ENCODE measurements at regions of chr11 and their contacts with region 1.

Region 1: DNA sequence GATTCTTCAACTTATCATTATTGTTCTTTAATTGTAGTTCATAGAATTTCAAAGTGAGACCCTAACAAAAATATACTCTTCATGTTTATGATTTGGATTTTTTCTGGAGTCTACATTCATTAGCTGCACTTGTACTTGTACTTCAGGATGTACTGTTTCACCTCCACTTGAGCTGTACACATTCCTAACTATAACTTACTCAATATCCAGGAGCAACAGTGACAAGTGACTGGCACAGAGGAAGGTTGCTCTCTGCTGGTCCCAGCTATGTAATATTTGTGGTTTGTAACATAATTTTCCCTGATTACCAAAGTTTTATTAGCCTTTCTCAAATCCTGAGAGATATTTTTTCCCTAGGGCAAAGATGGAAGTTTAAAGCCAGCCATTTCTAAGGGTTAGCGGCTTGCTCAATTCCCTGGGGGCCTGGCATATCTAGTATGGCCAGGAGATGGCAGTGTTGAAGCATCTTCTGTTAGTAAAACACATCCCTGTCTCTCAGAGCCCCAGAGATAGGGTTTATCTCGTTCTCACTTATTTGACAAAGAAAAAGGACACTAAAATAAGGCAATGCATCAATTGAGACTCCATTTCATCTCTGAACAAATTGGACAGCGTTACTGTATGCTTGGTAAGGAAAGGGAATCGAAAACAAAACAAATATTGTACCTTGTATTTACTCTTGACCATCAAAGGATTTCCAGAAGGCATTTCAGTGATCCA is 14.2 kb downstream of the OR52A5 start:
- DNase-seq: peak; percentile 6
- H3K4me3 Mint-ChIP-seq: no peak overlapping the region
- H3K27ac Mint-ChIP-seq: no peak overlapping the region
- H3K4me1 Mint-ChIP-seq: no peaks in the 10 kb centered on the region
- H3K27me3 Mint-ChIP-seq: peaks cover 2% of the 10 kb centered on the region

Region 2: DNA sequence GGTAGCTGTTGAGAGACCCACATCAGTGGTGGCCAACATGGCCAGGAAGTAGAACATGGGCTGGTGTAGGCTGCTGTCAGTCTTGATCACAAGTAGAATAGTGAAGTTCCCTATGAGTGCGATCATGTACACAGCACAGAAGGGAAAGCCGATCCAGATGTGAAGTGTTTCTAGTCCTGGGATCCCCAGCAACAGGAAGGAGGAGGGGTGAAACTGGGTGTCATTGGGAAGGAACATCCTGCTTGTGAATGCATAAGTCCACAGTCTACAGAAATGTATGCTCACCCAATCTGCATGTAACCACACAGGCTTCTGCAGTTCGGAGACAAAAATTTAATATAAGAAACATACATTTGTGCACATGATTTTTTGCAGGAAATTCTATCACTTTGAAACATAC is 64.6 kb before region 1 on chr11 and contains the start of gene OR52E2:
- intact Hi-C with region 1: no loop called
- DNase-seq: no peak
- H3K4me3 Mint-ChIP-seq: no peak within 1 kb of the TSS
- H3K27ac Mint-ChIP-seq: no peak within 1 kb of the TSS
- H3K4me1 Mint-ChIP-seq: no peaks in the 10 kb centered on the region
- H3K27me3 Mint-ChIP-seq: no peaks in the 10 kb centered on the region
- total RNA-seq, gene OR52E2: not detected in 2 replicates

Region 3: GRCh38 chr11:5291207-5291838 is 167.4 kb after region 1 on chr11:
- intact Hi-C with region 1: loop called (anchors 1 kb)
- DNase-seq: no peak
- H3K4me3 Mint-ChIP-seq: no peak overlapping the region
- H3K27ac Mint-ChIP-seq: no peak overlapping the region
- H3K4me1 Mint-ChIP-seq: no peaks in the 10 kb centered on the region
- H3K27me3 Mint-ChIP-seq: no peaks in the 10 kb centered on the region

Region 4: GRCh38 chr11:5380740-5381342 is 256.9 kb after region 1 on chr11:
- intact Hi-C with region 1: loop called (anchors 1 kb)
- DNase-seq: peak; percentile 2
- H3K4me3 Mint-ChIP-seq: no peak overlapping the region
- H3K27ac Mint-ChIP-seq: no peak overlapping the region
- H3K4me1 Mint-ChIP-seq: no peaks in the 10 kb centered on the region
- H3K27me3 Mint-ChIP-seq: no peaks in the 10 kb centered on the region

Region 5: DNA sequence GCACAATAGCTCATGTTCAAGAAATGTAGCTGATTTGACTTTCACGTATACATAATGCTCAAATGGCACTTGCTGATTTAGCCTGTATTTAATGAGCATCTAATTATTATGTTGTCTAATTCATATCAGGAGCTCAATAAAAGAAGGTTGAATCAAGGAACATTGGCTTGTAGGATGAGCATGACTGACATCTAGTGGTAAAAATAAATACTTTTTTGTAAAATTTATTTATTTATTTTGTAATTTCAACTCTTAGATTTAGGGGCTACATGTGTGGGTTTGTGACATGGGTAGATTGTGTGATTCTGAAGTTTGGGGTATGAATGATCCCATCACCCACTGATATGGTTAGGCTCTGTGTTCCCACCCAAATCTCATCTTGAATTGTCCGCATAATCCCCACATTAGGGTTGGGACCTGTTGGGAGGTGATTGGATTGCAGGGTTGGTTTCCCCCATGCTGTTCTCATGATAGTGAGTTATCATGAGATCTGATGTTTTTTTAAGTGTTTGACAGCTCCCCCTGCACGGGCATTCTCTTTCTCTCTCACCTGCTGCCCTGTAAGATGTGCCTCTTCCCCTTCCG is 767.3 kb after region 1 on chr11:
- intact Hi-C with region 1: loop called (anchors 2 kb)
- DNase-seq: no peak
- H3K4me3 Mint-ChIP-seq: no peak overlapping the region
- H3K27ac Mint-ChIP-seq: no peak overlapping the region
- H3K4me1 Mint-ChIP-seq: no peaks in the 10 kb centered on the region
- H3K27me3 Mint-ChIP-seq: no peaks in the 10 kb centered on the region